Activated CD4-positive, alpha-beta T cell treated with anti-CD3 and anti-CD28 coated beads for 36 hours (primary cell): ENCODE measurements at regions of chr3 and their contacts with region 1.

Region 1: GRCh38 chr3:161310649-161311423 is 60.5 kb downstream of the SPTSSB start:
- DNase-seq: peak; percentile 77
- ATAC-seq: peak; percentile 82
- H3K4me3 Mint-ChIP-seq: peak overlapping the region; percentile 9
- H3K27ac Mint-ChIP-seq: peak overlapping the region; percentile 62
- H3K4me1 Mint-ChIP-seq: peaks cover 61% of the 10 kb centered on the region
- H3K27me3 Mint-ChIP-seq: peaks cover 8% of the 10 kb centered on the region

Region 2: DNA sequence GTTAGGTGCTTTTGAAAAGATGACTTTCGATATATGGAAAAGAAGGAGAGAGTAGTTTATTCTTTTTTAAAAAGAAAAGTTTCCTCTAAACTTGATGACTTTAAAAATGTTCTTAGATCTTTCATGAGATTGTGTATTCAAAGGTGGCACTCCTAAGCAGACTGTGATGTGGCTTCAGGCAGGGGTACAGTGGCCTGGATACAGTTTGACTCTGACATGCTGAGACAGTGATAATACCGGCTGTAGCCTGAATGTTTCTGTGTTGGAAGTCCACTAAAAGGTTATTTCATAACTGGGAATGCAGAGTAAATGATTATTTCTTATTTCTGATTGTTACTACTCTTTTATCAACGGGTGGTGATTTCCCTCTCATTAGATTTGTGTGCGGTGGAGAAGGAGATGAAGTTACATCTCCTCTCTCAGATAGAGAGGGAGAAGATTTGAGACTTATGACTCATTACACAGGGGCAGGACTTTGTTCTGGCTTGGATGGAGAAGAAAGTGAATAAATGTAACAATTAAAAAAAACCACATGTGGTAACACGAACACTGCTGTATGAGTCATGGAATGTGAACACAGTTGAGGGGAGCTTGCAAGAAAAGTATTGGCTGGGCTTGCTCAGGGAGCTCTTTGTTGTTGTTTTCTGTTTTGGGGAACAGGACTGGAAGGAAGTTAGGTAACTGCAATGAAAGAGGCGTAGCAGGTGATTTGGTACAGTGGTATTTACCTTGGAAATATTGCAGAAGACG is 38.9 kb after region 1 on chr3:
- CTCF ChIA-PET with region 1: interaction called, 3 read pairs
- POLR2A ChIA-PET with region 1: no interaction called
- intact Hi-C with region 1: loop called (anchors 1 kb)
- DNase-seq: peak; percentile 32
- ATAC-seq: peak; percentile 90
- H3K4me3 Mint-ChIP-seq: no peak overlapping the region
- H3K27ac Mint-ChIP-seq: no peak overlapping the region
- H3K4me1 Mint-ChIP-seq: peaks cover 28% of the 10 kb centered on the region
- H3K27me3 Mint-ChIP-seq: peaks cover 8% of the 10 kb centered on the region

Region 3: DNA sequence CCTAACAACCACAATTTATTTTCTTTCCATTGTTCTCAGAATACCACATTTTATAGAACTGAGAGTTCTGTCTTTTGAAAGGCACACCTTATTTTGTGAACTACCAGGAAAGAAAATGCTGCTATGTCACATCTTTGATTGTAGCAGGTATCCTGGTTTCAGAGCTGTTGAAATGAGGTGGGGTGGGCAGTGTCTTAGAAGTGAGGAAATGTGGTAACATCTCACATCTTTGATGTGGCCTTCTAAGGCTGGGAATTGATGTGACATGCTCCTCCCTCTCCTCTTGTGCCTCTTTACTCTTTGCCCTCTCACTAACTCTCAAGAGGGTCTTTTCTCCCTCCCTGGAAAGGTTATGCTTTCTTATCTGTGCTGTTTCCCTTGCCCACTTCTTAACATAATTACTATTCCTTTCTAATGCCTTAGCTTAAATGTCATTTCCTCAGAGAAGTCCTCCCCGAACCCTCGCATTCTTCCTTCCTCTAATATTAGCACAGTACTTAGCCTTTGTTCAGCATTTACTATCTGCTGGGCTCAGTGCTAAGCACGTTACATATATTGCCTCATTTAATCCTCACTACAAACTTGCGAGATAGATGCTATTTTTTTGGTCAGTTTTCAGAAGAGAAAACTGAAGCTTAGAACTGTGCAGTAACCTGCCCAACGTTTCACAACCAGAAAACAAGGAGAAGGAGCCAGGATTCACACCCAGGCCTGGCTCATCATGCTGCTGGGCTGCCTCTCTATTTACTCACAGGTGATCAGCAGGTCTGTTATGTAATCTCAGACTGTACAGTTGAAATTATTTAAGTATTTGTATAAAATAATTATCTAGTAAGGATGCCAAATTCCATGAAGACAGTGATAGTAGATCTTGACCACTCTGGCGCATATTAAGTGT is 84.5 kb after region 1 on chr3:
- CTCF ChIA-PET with region 1: no interaction called
- POLR2A ChIA-PET with region 1: no interaction called
- intact Hi-C with region 1: loop called in 1 of 2 experiments (anchors 1 kb)
- DNase-seq: peak; percentile 40
- ATAC-seq: peak; percentile 90
- H3K4me3 Mint-ChIP-seq: no peak overlapping the region
- H3K27ac Mint-ChIP-seq: no peak overlapping the region
- H3K4me1 Mint-ChIP-seq: peaks cover 40% of the 10 kb centered on the region
- H3K27me3 Mint-ChIP-seq: peaks cover 8% of the 10 kb centered on the region

Region 4: GRCh38 chr3:161409069-161409468 is 98.2 kb after region 1 on chr3:
- CTCF ChIA-PET with region 1: interaction called, 6 read pairs
- POLR2A ChIA-PET with region 1: no interaction called
- intact Hi-C with region 1: loop called in 1 of 2 experiments (anchors 5 kb)
- DNase-seq: peak; percentile 53
- ATAC-seq: no peak
- H3K4me3 Mint-ChIP-seq: no peak overlapping the region
- H3K27ac Mint-ChIP-seq: no peak overlapping the region
- H3K4me1 Mint-ChIP-seq: peaks cover 24% of the 10 kb centered on the region
- H3K27me3 Mint-ChIP-seq: peaks cover 2% of the 10 kb centered on the region

Region 5: GRCh38 chr3:161914737-161915417 is 604.0 kb after region 1 on chr3:
- CTCF ChIA-PET with region 1: no interaction called
- POLR2A ChIA-PET with region 1: no interaction called
- intact Hi-C with region 1: no loop called
- DNase-seq: peak; percentile 8
- ATAC-seq: no peak
- H3K4me3 Mint-ChIP-seq: no peak overlapping the region
- H3K27ac Mint-ChIP-seq: no peak overlapping the region
- H3K4me1 Mint-ChIP-seq: no peaks in the 10 kb centered on the region
- H3K27me3 Mint-ChIP-seq: no peaks in the 10 kb centered on the region